Activated CD4-positive, alpha-beta T cell treated with anti-CD3 and anti-CD28 coated beads for 36 hours (primary cell): ENCODE measurements at regions of chr20 and their contacts with region 1.

Region 1: GRCh38 chr20:60210779-60211617 is 252.8 kb downstream of the CDH26 start:
- DNase-seq: peak; percentile 83
- ATAC-seq: peak; percentile 77
- H3K4me3 Mint-ChIP-seq: no peak overlapping the region
- H3K27ac Mint-ChIP-seq: no peak overlapping the region
- H3K4me1 Mint-ChIP-seq: peaks cover 4% of the 10 kb centered on the region
- H3K27me3 Mint-ChIP-seq: no peaks in the 10 kb centered on the region

Region 2: GRCh38 chr20:59940174-59940971 is 270.6 kb before region 1 on chr20 and contains the starts of genes FAM217B and PPP1R3D:
- CTCF ChIA-PET with region 1: interaction called, 5 read pairs
- POLR2A ChIA-PET with region 1: no interaction called
- intact Hi-C with region 1: loop called in 1 of 2 experiments (anchors 10 kb)
- DNase-seq: peak; percentile 95
- ATAC-seq: peak; percentile 95
- H3K4me3 Mint-ChIP-seq: peak within 1 kb of the TSS; percentile 90
- H3K27ac Mint-ChIP-seq: peak within 1 kb of the TSS; percentile 95
- H3K4me1 Mint-ChIP-seq: peaks cover 36% of the 10 kb centered on the region
- H3K27me3 Mint-ChIP-seq: no peaks in the 10 kb centered on the region
- total RNA-seq, gene FAM217B: 25.6 to 33.2 TPM
- total RNA-seq, gene PPP1R3D: 4.4 to 4.7 TPM

Region 3: GRCh38 chr20:60262967-60263603 is 52.1 kb after region 1 on chr20:
- CTCF ChIA-PET with region 1: interaction called, 32 read pairs
- POLR2A ChIA-PET with region 1: no interaction called
- intact Hi-C with region 1: loop called (anchors 1 to 5 kb)
- DNase-seq: peak; percentile 70
- ATAC-seq: peak; percentile 36
- H3K4me3 Mint-ChIP-seq: no peak overlapping the region
- H3K27ac Mint-ChIP-seq: no peak overlapping the region
- H3K4me1 Mint-ChIP-seq: peaks cover 16% of the 10 kb centered on the region
- H3K27me3 Mint-ChIP-seq: no peaks in the 10 kb centered on the region

Region 4: GRCh38 chr20:61120595-61121515 is 909.9 kb after region 1 on chr20:
- CTCF ChIA-PET with region 1: interaction called, 3 read pairs
- POLR2A ChIA-PET with region 1: no interaction called
- intact Hi-C with region 1: loop called in 1 of 2 experiments (anchors 1 kb)
- DNase-seq: peak; percentile 68
- ATAC-seq: peak; percentile 95
- H3K4me3 Mint-ChIP-seq: no peak overlapping the region
- H3K27ac Mint-ChIP-seq: no peak overlapping the region
- H3K4me1 Mint-ChIP-seq: peaks cover 5% of the 10 kb centered on the region
- H3K27me3 Mint-ChIP-seq: peaks cover 3% of the 10 kb centered on the region